Activated naive CD4-positive, alpha-beta T cell treated with anti-CD3 and anti-CD28 coated beads for 36 hours (primary cell): ENCODE measurements at regions of chr2 and their contacts with region 1.

Region 1: GRCh38 chr2:102082571-102083392 is 59.8 kb upstream of the IL1R1 start:
- DNase-seq: peak; percentile 79
- H3K4me3 Mint-ChIP-seq: peak overlapping the region; percentile 30
- H3K27ac Mint-ChIP-seq: peak overlapping the region; percentile 91
- H3K4me1 Mint-ChIP-seq: peaks cover 60% of the 10 kb centered on the region
- H3K27me3 Mint-ChIP-seq: no peaks in the 10 kb centered on the region

Region 2: GRCh38 chr2:101900375-101900774 is 182.4 kb before region 1 on chr2:
- CTCF ChIA-PET with region 1: no interaction called
- intact Hi-C with region 1: loop called (anchors 1 kb)
- DNase-seq: peak; percentile 87
- H3K4me3 Mint-ChIP-seq: no peak overlapping the region
- H3K27ac Mint-ChIP-seq: peak overlapping the region; percentile 87
- H3K4me1 Mint-ChIP-seq: peaks cover 33% of the 10 kb centered on the region
- H3K27me3 Mint-ChIP-seq: peaks cover 2% of the 10 kb centered on the region

Region 3: GRCh38 chr2:102063941-102064678 is 18.7 kb before region 1 on chr2:
- CTCF ChIA-PET with region 1: interaction called, 5 read pairs
- intact Hi-C with region 1: loop called (anchors 1 kb)
- DNase-seq: peak; percentile 73
- H3K4me3 Mint-ChIP-seq: no peak overlapping the region
- H3K27ac Mint-ChIP-seq: peak overlapping the region; percentile 44
- H3K4me1 Mint-ChIP-seq: peaks cover 27% of the 10 kb centered on the region
- H3K27me3 Mint-ChIP-seq: no peaks in the 10 kb centered on the region

Region 4: DNA sequence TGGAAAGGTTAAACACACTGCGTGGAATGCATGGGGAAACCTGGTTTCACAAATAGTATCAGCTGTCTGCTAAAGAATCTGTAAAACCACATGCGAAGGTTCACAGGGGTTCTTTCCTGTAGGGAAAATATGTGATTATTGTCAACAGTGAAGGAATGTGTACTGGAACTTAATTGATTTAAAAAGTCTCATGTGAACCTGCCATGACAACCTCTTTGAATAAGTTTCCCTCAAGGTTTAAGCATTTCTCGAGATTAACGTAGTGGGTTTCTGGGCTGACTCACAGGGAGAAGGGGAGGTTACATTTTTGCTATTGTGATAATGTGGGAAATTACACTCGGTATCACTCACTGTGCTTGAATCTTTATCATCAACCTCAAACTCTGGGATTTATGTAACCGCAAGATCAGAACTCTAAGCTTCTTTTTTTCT is 31.5 kb after region 1 on chr2:
- CTCF ChIA-PET with region 1: no interaction called
- intact Hi-C with region 1: loop called (anchors 1 kb)
- DNase-seq: peak; percentile 57
- H3K4me3 Mint-ChIP-seq: no peak overlapping the region
- H3K27ac Mint-ChIP-seq: peak overlapping the region; percentile 54
- H3K4me1 Mint-ChIP-seq: peaks cover 62% of the 10 kb centered on the region
- H3K27me3 Mint-ChIP-seq: no peaks in the 10 kb centered on the region

Region 5: DNA sequence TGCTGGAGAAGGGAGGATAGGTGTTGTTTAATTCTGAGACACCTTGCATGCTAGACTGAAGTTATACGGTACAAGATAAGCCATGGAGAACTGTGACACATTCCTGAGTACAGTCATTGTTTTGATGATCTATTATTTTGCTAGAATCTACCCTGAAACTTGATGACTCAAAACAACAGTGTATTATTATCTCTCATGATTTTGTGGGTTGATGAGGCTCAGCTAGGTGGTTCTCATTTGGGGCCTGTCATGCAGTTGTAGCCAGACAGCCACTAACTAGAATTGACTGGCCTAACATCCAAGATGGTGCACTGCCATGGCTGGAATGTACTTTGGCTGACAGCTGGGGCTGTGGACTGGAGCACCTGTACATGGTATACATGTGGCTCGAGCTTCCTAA is 54.4 kb after region 1 on chr2:
- CTCF ChIA-PET with region 1: no interaction called
- intact Hi-C with region 1: loop called (anchors 1 kb)
- DNase-seq: peak; percentile 72
- H3K4me3 Mint-ChIP-seq: no peak overlapping the region
- H3K27ac Mint-ChIP-seq: peak overlapping the region; percentile 62
- H3K4me1 Mint-ChIP-seq: peaks cover 39% of the 10 kb centered on the region
- H3K27me3 Mint-ChIP-seq: peaks cover 26% of the 10 kb centered on the region

Region 6: GRCh38 chr2:102615622-102616436 is 533.0 kb after region 1 on chr2:
- CTCF ChIA-PET with region 1: no interaction called
- intact Hi-C with region 1: no loop called
- DNase-seq: peak; percentile 72
- H3K4me3 Mint-ChIP-seq: no peak overlapping the region
- H3K27ac Mint-ChIP-seq: no peak overlapping the region
- H3K4me1 Mint-ChIP-seq: peaks cover 12% of the 10 kb centered on the region
- H3K27me3 Mint-ChIP-seq: peaks cover 41% of the 10 kb centered on the region